CD4-positive, alpha-beta memory T cell (primary cell): ENCODE measurements at regions of chr6 and their contacts with region 1.

Region 1: DNA sequence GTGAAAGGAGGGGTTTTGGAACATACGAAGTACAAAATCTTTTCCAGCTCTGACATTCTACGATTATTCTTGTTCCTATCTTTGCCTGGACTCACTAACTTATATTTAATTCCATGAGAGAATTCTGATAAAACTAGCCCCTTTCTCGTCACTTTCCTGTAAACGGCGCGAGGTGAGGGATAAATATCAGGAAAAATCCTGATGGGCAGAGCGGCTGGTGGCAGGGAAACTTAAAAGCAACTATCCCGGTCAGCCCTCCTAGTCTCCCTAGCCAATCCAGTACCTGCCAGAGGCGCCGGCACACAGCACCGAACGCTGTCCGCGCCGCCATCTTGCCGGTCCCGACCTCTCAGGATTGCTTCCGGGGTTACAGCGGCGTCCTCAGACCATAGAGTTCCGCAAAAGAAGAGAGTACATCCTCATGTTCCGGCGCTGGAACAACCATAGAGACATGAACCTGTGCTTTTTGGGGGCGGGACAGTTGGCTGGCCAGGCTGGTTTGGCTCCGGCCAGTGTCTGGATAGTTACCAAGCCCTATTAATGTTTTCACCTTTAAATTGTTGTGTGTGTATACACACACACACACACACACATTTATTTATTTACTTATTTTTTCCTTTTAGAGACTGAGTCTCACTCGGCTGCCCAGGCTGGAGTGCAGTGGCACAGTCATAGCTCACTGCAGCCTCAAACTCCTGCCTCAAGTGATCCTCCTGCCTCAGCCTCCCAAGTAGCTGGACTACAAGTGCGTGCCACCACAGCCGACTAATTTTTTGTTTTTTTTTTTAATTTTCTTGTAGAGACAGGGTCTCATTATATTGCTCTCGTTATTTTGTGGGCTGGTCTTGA is at the start of gene MRPS10:
- DNase-seq: peak; percentile 88 to 93 (median 90)
- H3K4me3 ChIP-seq: peak within 1 kb of the TSS; percentile 71 to 72
- H3K4me3 Mint-ChIP-seq: peak within 1 kb of the TSS; percentile 95 to 99 (median 98)
- H3K27ac ChIP-seq: peak within 1 kb of the TSS; percentile 81
- H3K27ac Mint-ChIP-seq: peak within 1 kb of the TSS; percentile 90 to 98 (median 97)
- H3K4me1 ChIP-seq: peaks cover 29% of the 10 kb centered on the region
- H3K4me1 Mint-ChIP-seq: peaks cover 12 to 28% (median 20%) of the 10 kb centered on the region in 4 donors
- H3K27me3 ChIP-seq: no peaks in the 10 kb centered on the region
- H3K27me3 Mint-ChIP-seq: no peaks in the 10 kb centered on the region
- total RNA-seq, gene MRPS10: 22.6 to 25.1 TPM

Region 2: GRCh38 chr6:41779793-41780545 is 437.8 kb before region 1 on chr6 and contains the start of gene FRS3:
- CTCF ChIA-PET with region 1: interaction called, 10 read pairs
- POLR2A ChIA-PET with region 1: no interaction called
- intact Hi-C with region 1: loop called (anchors 1 kb)
- DNase-seq: peak; percentile 96 to 99 (median 97)
- H3K4me3 ChIP-seq: peak within 1 kb of the TSS; percentile 45 to 76
- H3K4me3 Mint-ChIP-seq: peak within 1 kb of the TSS; percentile 87 to 94 (median 88)
- H3K27ac ChIP-seq: peak within 1 kb of the TSS; percentile 44
- H3K27ac Mint-ChIP-seq: peak within 1 kb of the TSS in 6 of 7 donors; percentile 83 to 93 (median 88)
- H3K4me1 ChIP-seq: peaks cover 15% of the 10 kb centered on the region
- H3K4me1 Mint-ChIP-seq: peaks cover 9 to 32% (median 13%) of the 10 kb centered on the region in 4 donors
- H3K27me3 ChIP-seq: no peaks in the 10 kb centered on the region
- H3K27me3 Mint-ChIP-seq: peaks cover 2 to 3% of the 10 kb centered on the region in 2 donors
- total RNA-seq, gene FRS3: 8.9 to 10.0 TPM

Region 3: DNA sequence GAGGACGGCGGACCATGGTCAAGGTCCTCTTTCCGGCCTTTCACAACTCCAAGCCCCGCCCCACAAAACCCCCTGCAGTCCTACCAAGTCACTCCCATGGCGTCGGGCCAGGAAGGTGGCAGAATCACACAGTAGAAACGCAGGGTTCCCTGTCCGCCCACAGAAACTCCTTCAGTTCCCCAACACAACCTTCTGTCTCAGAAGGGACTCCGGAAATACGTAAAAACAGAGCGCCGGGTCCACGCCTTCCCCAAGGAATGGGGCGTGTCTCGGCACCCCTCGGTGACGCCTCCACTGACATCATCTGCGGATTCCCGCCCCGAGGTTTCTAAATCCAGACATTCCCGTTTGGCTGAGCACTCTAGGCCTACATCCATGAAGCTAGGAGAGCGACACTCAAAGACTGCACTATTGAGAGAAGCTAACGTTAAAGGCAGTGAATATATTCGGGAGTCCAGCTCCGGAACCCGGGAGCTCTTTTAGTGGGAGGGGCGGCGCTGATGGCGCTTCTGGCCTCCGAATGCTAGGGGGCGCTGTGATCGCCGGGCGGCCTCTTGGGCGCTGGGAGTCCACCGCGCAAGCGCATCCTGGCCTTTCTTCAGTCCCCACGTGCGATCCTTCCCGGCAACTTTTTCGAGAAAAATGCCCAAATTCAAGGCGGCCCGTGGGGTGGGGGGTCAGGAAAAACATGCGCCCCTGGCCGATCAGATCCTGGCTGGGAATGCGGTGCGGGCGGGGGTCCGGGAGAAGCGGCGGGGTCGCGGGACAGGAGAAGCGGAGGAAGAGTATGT is 296.6 kb before region 1 on chr6 and contains the starts of genes BYSL and MED20:
- CTCF ChIA-PET with region 1: interaction called, 9 read pairs
- POLR2A ChIA-PET with region 1: interaction called, 4 read pairs
- intact Hi-C with region 1: loop called (anchors 1 kb)
- DNase-seq: peak; percentile 94 to 96 (median 95)
- H3K4me3 ChIP-seq: peak within 1 kb of the TSS; percentile 75 to 99
- H3K4me3 Mint-ChIP-seq: peak within 1 kb of the TSS; percentile 99 to 100 (median 100)
- H3K27ac ChIP-seq: peak within 1 kb of the TSS; percentile 91
- H3K27ac Mint-ChIP-seq: peak within 1 kb of the TSS; percentile 98 to 100 (median 100)
- H3K4me1 ChIP-seq: peaks cover 47% of the 10 kb centered on the region
- H3K4me1 Mint-ChIP-seq: peaks cover 34 to 57% (median 47%) of the 10 kb centered on the region in 4 donors
- H3K27me3 ChIP-seq: no peaks in the 10 kb centered on the region
- H3K27me3 Mint-ChIP-seq: peaks cover 0 to 2% of the 10 kb centered on the region in 2 donors
- total RNA-seq, gene BYSL: 7.1 to 9.2 TPM
- total RNA-seq, gene MED20: 10.0 to 11.5 TPM

Region 4: DNA sequence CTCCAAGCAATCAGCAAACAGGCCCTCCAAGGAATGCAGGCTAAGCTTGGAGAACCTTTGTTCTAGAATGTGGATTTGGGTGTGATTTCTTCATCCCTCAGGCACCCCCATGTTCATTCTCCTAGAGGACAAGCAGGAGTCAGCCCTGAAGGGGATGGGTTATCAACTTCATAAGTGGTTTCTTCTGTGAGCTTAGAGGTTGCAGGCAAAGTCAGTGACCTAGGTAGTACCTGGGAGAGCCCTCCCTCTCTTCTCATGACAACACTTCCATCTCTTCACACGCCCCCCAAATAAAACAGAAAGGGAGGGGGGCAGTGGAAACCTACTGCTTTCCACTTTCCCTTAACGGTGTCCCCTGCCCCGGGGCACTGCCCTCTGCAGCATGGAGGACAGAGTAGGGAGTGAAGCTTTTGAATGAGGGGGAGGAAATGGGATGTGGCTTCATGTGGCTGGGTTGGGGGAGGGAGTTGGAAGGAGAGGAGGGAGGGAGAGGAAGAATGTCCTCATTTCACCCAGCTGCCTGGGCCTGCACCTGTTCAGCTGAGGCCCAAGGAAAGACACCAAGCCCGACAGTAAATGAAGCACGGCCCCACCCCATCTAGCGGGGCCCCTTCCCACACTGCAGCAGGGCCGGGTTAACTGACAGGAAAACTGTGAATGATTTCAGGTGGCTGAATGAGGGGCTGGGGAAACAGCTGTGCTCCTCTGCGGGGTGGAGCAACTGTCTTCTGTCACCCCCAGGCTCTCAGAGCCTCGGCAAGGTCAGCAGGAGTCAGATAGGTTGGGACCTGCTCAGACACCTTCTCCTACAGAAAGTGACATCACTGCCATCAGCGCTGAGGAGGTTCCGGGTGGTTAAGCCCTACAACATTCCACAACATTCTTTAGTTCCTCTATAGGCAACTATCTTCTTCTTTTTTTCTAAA is 207.5 kb before region 1 on chr6:
- CTCF ChIA-PET with region 1: no interaction called
- POLR2A ChIA-PET with region 1: no interaction called
- intact Hi-C with region 1: no loop called
- DNase-seq: no peak
- H3K4me3 ChIP-seq: no peak overlapping the region
- H3K4me3 Mint-ChIP-seq: peak overlapping the region; percentile 48 to 84 (median 70)
- H3K27ac ChIP-seq: peak overlapping the region; percentile 51
- H3K27ac Mint-ChIP-seq: peak overlapping the region; percentile 73 to 93 (median 87)
- H3K4me1 ChIP-seq: peaks cover 64% of the 10 kb centered on the region
- H3K4me1 Mint-ChIP-seq: peaks cover 57 to 85% (median 69%) of the 10 kb centered on the region in 4 donors
- H3K27me3 ChIP-seq: no peaks in the 10 kb centered on the region
- H3K27me3 Mint-ChIP-seq: no peaks in the 10 kb centered on the region

Region 5: DNA sequence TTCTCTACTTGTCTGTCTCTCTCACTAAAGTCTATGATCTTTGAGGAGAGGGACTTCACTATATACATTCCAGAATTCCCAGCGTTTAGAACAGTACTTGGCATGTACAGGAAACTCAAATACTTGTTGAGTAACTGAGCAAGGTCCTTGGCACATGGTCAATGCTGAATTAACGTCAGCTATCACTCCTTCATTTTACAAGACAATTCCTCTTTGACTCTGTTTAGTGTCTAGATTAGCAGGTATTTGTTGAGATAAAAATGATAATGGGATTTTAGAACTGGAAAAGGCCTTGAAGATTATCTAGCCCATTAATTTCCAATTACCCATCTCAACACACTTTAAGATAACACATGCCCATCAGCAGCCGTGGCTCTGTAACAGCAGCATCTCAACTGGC is 16.4 kb before region 1 on chr6:
- CTCF ChIA-PET with region 1: interaction called, 14 read pairs
- POLR2A ChIA-PET with region 1: interaction called, 3 read pairs
- intact Hi-C with region 1: no loop called
- DNase-seq: no peak
- H3K4me3 ChIP-seq: no peak overlapping the region
- H3K4me3 Mint-ChIP-seq: no peak overlapping the region
- H3K27ac ChIP-seq: no peak overlapping the region
- H3K27ac Mint-ChIP-seq: peak overlapping the region in 1 of 7 donors; percentile 47
- H3K4me1 ChIP-seq: no peaks in the 10 kb centered on the region
- H3K4me1 Mint-ChIP-seq: peaks cover 0 to 8% (median 0%) of the 10 kb centered on the region in 4 donors
- H3K27me3 ChIP-seq: no peaks in the 10 kb centered on the region
- H3K27me3 Mint-ChIP-seq: no peaks in the 10 kb centered on the region